Activated CD4-positive, alpha-beta T cell treated with anti-CD3 and anti-CD28 coated beads for 36 hours (primary cell): ENCODE measurements at regions of chr2 and their contacts with region 1.

Region 1: GRCh38 chr2:227106845-227107759 is 56.9 kb downstream of the COL4A4 start:
- DNase-seq: peak; percentile 65
- ATAC-seq: no peak
- H3K4me3 Mint-ChIP-seq: no peak overlapping the region
- H3K27ac Mint-ChIP-seq: no peak overlapping the region
- H3K4me1 Mint-ChIP-seq: no peaks in the 10 kb centered on the region
- H3K27me3 Mint-ChIP-seq: peaks cover 2% of the 10 kb centered on the region

Region 2: DNA sequence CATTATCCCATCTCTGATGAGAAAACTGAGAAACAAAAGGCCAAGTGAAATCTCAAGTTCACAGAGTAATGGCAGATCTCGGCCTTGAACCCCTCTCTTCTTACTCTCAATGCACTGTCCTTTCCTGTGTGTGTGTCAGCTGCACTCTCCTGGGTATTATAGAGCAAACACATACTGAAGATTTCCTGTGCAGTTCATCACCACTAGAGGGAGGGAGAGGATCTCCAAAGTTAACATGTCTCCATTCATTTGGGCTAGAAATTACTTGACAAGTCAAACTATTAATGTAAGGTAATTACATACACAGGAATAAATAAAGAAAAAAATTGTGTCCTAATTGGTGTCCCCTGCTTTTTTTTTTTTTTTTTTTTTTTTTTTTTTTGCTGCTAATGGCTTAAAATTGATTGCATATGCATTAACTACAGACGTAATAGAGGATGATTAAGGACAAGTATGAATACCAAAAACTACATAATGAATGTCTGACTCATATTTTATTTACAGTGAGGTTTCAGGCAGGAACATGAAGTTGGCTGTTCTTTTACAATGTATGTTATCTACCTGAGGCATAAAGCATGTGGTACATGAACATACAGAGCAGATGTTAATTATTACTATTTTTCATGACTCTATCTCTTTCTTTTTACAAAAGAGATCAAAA is 1438.4 kb before region 1 on chr2:
- CTCF ChIA-PET with region 1: interaction called, 3 read pairs
- POLR2A ChIA-PET with region 1: no interaction called
- intact Hi-C with region 1: loop called (anchors 2 kb)
- DNase-seq: peak; percentile 14
- ATAC-seq: peak; percentile 79
- H3K4me3 Mint-ChIP-seq: no peak overlapping the region
- H3K27ac Mint-ChIP-seq: no peak overlapping the region
- H3K4me1 Mint-ChIP-seq: no peaks in the 10 kb centered on the region
- H3K27me3 Mint-ChIP-seq: peaks cover 10% of the 10 kb centered on the region

Region 3: GRCh38 chr2:225889446-225889850 is 1217.7 kb before region 1 on chr2:
- CTCF ChIA-PET with region 1: no interaction called
- POLR2A ChIA-PET with region 1: no interaction called
- intact Hi-C with region 1: loop called in 1 of 2 experiments (anchors 5 kb)
- DNase-seq: no peak
- ATAC-seq: no peak
- H3K4me3 Mint-ChIP-seq: no peak overlapping the region
- H3K27ac Mint-ChIP-seq: no peak overlapping the region
- H3K4me1 Mint-ChIP-seq: no peaks in the 10 kb centered on the region
- H3K27me3 Mint-ChIP-seq: peaks cover 11% of the 10 kb centered on the region

Region 4: GRCh38 chr2:226198956-226199355 is 908.1 kb before region 1 on chr2:
- CTCF ChIA-PET with region 1: no interaction called
- POLR2A ChIA-PET with region 1: no interaction called
- intact Hi-C with region 1: loop called in 1 of 2 experiments (anchors 5 kb)
- DNase-seq: no peak
- ATAC-seq: no peak
- H3K4me3 Mint-ChIP-seq: no peak overlapping the region
- H3K27ac Mint-ChIP-seq: no peak overlapping the region
- H3K4me1 Mint-ChIP-seq: no peaks in the 10 kb centered on the region
- H3K27me3 Mint-ChIP-seq: peaks cover 5% of the 10 kb centered on the region

Region 5: DNA sequence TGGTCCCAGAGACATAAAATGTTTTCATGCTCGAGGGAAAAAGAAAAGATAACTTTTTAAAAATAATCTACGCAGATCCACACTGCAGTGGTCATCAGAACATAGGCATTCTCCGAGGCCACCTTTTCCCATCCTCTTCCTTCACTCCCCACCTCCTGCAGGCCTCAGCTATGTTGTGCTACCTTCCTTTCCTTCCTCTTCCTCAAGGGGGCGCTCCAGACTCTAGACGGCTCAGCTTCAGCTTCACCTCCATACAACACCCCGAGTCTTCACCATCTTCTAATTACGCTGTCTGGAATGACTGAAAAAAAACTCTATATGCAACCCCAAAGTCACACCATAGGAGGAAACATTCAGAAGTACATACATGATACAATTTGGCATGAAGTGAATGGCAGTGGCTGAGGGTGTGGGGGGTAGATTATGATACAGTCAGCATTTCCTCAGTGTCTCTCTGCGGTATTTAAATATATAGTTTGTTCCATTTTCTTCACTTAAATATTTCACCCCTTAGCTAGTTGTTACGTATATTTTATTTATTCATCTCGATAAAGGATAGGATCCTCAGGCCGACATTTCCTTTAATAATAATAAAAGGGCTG is 891.1 kb before region 1 on chr2:
- CTCF ChIA-PET with region 1: no interaction called
- POLR2A ChIA-PET with region 1: no interaction called
- intact Hi-C with region 1: loop called in 1 of 2 experiments (anchors 1 kb)
- DNase-seq: peak; percentile 80
- ATAC-seq: peak; percentile 95
- H3K4me3 Mint-ChIP-seq: no peak overlapping the region
- H3K27ac Mint-ChIP-seq: no peak overlapping the region
- H3K4me1 Mint-ChIP-seq: no peaks in the 10 kb centered on the region
- H3K27me3 Mint-ChIP-seq: peaks cover 3% of the 10 kb centered on the region

Region 6: DNA sequence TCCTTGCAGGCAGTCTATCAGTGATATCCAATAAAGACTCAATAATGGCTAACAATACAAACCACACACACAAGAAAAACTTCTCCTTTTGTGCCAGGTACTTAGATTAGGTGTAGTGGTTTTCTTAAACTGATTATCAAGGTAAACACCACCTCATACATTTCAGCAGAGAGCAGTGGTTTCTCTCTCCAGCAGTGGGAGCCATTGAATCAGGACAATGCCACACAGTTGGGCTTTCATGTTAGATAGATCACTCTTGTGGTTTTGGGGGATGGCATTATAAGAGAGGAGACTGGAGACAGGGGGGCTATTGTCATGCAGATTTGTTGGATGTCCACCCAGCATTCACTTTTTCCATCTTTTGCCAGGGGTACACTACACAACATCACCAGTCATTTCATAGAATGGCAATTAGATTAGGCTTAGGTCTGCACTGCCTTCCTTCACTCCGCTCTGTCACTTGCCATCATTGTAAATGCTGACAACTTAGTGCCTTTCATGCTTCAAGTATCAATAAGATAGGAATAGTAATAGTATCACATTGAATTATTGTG is 293.9 kb before region 1 on chr2:
- CTCF ChIA-PET with region 1: no interaction called
- POLR2A ChIA-PET with region 1: no interaction called
- intact Hi-C with region 1: loop called (anchors 1 to 10 kb)
- DNase-seq: peak; percentile 17
- ATAC-seq: no peak
- H3K4me3 Mint-ChIP-seq: no peak overlapping the region
- H3K27ac Mint-ChIP-seq: no peak overlapping the region
- H3K4me1 Mint-ChIP-seq: no peaks in the 10 kb centered on the region
- H3K27me3 Mint-ChIP-seq: peaks cover 23% of the 10 kb centered on the region

Region 7: GRCh38 chr2:227033471-227034148 is 73.5 kb before region 1 on chr2:
- CTCF ChIA-PET with region 1: no interaction called
- POLR2A ChIA-PET with region 1: no interaction called
- intact Hi-C with region 1: loop called in 1 of 2 experiments (anchors 5 kb)
- DNase-seq: peak; percentile 55
- ATAC-seq: peak; percentile 64
- H3K4me3 Mint-ChIP-seq: no peak overlapping the region
- H3K27ac Mint-ChIP-seq: no peak overlapping the region
- H3K4me1 Mint-ChIP-seq: no peaks in the 10 kb centered on the region
- H3K27me3 Mint-ChIP-seq: peaks cover 15% of the 10 kb centered on the region

Region 8: GRCh38 chr2:227117852-227118251 is 10.8 kb after region 1 on chr2:
- CTCF ChIA-PET with region 1: no interaction called
- POLR2A ChIA-PET with region 1: no interaction called
- intact Hi-C with region 1: no loop called
- DNase-seq: no peak
- ATAC-seq: no peak
- H3K4me3 Mint-ChIP-seq: no peak overlapping the region
- H3K27ac Mint-ChIP-seq: no peak overlapping the region
- H3K4me1 Mint-ChIP-seq: no peaks in the 10 kb centered on the region
- H3K27me3 Mint-ChIP-seq: peaks cover 13% of the 10 kb centered on the region